Left cardiac atrium (tissue), 4 donors: ENCODE measurements at regions of chr17 and their contacts with region 1.

Region 1: GRCh38 chr17:28967221-28968140 is 16.2 kb upstream of the PHF12 start:
- DNase-seq: peak; percentile 15
- ATAC-seq: peak in 1 of 2 donors; percentile 14

Region 2: GRCh38 chr17:29111816-29112499 is 144.5 kb after region 1 on chr17:
- intact Hi-C with region 1: loop called (anchors 2 to 5 kb)
- DNase-seq: peak; percentile 78
- ATAC-seq: peak; percentile 65

Region 3: DNA sequence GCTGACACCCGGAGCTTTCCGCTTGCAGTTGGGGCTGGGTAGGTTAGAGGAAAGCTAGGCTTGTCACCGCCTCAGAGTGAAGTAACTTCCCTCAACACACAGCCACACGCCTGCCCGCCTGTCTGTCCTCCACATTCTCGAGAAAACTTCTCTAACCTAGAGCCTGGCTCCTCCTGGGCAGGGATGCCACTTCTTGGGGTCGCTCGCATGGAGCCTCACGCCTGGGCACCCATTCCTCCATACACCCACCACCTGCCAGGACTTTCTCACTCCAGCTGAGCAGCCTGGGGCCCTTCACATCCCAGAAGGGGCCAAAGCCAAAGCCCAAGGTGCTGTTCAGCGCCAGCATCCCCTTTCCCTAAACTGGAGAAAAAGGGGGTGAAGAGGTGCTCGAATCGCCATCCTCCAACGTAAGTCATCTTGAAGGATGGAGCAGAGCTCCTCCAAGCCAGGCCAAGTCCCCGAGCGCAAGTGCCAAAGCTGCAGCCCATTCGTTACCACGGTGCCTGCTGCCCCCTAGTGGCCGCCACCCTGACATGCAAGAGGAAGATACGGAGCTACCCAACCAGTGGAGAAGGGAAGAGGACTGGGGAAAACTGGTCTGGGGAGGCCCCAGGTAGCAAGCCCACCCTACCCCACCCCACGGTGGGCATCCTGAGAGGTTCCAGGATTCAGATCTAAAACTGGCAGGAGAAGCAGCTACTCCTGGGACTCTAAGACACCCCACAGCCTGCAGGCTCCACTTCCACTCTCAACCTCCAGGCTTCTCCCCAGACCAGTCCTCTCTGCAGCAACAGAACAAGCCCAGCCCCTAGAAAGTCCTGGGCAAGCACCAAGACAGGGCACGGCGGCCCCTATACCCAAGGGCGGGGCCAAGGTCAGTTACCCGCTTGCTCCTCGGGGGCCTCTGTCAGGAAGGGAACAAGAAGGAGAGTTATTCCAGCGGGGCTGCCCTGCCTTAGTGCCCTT is 149.6 kb after region 1 on chr17:
- intact Hi-C with region 1: loop called (anchors 2 to 5 kb)
- DNase-seq: peak; percentile 84
- ATAC-seq: peak; percentile 39 to 51

Region 4: DNA sequence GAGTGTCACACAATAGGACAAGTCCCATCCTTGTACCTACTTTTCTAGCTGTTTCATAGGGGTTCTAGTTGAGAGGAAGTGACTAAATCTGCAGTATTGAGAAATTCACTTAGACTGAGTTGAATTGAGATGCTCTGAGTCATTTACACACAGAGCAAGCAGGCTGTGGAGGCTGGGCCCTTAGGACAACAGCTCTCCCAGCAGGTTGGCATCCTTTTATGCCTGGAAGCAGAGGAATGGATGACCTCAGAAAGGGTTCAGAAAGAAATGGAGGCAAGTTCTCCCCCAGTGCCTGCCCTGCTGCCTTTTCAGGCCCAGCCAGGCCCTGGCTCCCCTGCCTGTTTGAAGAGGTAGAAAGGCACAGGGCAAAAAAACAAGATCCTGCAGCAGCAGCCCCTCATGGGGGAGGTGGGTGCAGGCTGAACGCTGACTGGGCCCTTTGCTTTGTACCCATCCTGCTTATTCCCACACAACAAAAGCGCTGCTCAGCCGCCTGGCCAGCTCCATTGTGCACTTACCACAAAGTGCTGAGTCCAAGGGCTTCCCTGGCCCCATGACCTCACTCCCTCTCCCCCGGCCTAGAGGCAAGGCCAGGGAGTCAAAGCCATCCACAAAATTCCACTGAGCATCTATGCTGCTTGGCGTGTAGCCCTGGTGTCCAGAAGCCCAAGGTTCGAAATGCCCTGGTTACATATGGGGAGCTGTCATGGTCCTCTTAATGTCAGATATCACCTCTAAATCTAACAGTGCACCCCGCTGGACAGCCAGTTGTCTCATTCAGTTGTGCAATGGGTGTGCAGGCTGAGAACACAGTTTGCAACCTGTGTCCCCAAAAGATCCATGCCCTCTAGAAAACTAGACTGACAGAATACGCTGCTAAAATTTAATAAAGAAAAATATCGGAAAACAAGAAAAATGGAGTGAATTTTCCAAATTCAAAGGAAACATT is 273.8 kb after region 1 on chr17:
- intact Hi-C with region 1: no loop called
- DNase-seq: peak; percentile 60
- ATAC-seq: peak; percentile 63 to 96